Transverse colon (tissue), 4 donors: ENCODE measurements at regions of chr17 and their contacts with region 1.

Region 1: DNA sequence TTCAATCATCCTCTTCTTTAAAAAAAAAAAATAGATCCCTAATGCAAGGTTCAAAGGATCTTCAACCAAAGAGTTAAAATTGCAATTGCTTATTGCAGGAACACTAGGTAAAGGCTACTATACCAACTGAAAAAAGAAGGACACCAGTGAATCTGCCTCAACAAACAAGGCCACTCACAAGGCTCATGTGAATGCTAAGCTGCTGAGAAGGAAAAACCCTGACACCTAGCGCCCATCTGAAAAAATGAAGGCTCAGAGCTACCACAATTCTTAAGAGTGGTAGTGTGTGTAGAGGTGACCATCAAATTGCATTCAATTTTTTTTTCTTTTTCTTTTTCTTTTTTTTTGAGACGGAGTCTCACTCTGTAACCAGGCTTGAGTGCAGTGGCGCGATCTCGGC is 201.6 kb upstream of the C17orf78 start:
- DNase-seq: no peak
- H3K4me3 ChIP-seq: no peak overlapping the region
- H3K27ac ChIP-seq: no peak overlapping the region
- H3K4me1 ChIP-seq: no peaks in the 10 kb centered on the region
- H3K27me3 ChIP-seq: no peaks in the 10 kb centered on the region
- CTCF ChIP-seq: peak in 3 of 5 experiments; percentile 7 to 21 (median 9)
- EP300 ChIP-seq: no peak
- POLR2A ChIP-seq: no peak

Region 2: DNA sequence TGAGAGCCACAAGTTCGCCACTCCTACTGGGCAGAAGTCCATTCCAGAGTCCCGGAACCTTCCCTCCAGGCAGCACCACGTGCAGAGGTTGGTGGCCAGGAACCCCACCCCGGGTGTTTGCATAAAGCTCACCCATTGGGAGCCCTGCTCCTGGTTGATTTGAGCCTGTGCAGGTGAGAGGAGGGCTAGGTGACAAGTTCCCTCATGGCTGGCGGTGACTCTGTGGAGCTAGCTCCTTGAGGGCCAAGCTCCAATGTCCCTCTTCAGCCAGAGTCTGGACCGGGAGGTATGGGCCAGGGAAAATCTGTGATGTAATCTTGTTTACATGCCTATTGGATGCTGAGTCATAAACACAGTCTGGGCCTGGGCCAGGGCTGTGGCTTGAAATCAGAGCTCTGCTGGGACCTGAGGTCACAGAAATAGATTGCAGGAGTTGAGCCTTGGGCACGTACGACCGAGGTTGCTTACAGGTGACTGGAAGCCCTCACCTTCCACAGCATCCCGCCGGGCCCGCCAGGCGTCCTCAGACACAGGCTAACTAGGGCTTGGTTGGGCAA is 106.6 kb before region 1 on chr17:
- in situ Hi-C with region 1: loop called in 1 of 4 experiments (anchors 25 kb)
- intact Hi-C with region 1: no loop called
- DNase-seq: peak; percentile 71
- H3K4me3 ChIP-seq: no peak overlapping the region
- H3K27ac ChIP-seq: peak overlapping the region in 2 of 4 donors; percentile 12 to 19
- H3K4me1 ChIP-seq: peaks cover 0 to 21% (median 12%) of the 10 kb centered on the region in 4 donors
- H3K27me3 ChIP-seq: peaks cover 5% of the 10 kb centered on the region
- CTCF ChIP-seq: no peak
- EP300 ChIP-seq: no peak
- POLR2A ChIP-seq: no peak